Left ventricle myocardium superior (tissue), 1 donor: ENCODE measurements at regions of chr9 and their contacts with region 1.

Region 1: DNA sequence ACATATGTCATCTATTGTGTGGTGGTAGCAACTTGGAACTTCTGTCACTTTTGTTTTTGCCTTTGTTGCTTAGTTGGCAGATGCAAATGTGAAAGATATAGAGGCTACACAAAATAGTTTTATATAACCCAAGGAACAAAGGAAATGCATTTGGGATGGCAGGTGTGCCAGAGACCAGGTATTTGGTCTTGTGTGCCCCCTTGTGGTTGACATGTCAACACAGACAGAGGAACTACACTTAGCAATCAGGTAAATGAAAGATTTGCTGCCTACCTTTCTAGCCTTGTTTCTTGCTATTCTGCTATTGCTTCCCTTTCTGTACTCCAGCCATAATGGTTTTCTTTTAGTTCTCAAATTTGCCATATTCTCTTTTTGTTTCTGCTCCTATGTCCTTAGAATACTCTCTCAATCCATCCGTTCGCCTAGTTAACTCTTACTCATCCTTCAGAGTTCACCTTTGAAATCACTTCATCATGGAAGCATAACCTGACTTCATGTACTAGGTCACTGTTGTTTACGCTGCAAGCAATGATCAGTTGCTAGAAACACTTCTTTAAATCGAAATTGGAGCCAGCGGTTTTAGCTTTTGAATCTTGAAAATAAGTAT is 119.5 kb downstream of the TRPM3 start:
- DNase-seq: no peak
- ATAC-seq: no peak

Region 2: GRCh38 chr9:70639853-70640814 is 361.7 kb before region 1 on chr9:
- intact Hi-C with region 1: loop called (anchors 10 kb)
- DNase-seq: no peak
- ATAC-seq: peak; percentile 61

Region 3: GRCh38 chr9:71108937-71109336 is 107.1 kb after region 1 on chr9:
- intact Hi-C with region 1: no loop called
- DNase-seq: no peak
- ATAC-seq: no peak

Region 4: GRCh38 chr9:71136696-71137095 is 134.8 kb after region 1 on chr9:
- intact Hi-C with region 1: no loop called
- DNase-seq: no peak
- ATAC-seq: no peak